Activated T-helper 2 cell treated with anti-CD3 and anti-CD28 coated beads, Interferon-gamma antibody, Interleukin-2, Interleukin-4, amounts not matched to agents 10 μg/mL and 5 μg/mL and 100 μg/mL, durations not matched to agents 14 hours and 24 hours and 36 hours (primary cell): ENCODE measurements at regions of chr1 and their contacts with region 1.

Region 1: GRCh38 chr1:84143796-84144565 is at the start of gene PRKACB:
- DNase-seq: no peak
- H3K4me3 Mint-ChIP-seq: peak within 1 kb of the TSS; percentile 95
- H3K27ac Mint-ChIP-seq: peak within 1 kb of the TSS; percentile 98
- H3K4me1 Mint-ChIP-seq: peaks cover 36% of the 10 kb centered on the region
- H3K27me3 Mint-ChIP-seq: no peaks in the 10 kb centered on the region
- total RNA-seq, gene PRKACB: 16.4 and 20.9 TPM in 2 replicates

Region 2: DNA sequence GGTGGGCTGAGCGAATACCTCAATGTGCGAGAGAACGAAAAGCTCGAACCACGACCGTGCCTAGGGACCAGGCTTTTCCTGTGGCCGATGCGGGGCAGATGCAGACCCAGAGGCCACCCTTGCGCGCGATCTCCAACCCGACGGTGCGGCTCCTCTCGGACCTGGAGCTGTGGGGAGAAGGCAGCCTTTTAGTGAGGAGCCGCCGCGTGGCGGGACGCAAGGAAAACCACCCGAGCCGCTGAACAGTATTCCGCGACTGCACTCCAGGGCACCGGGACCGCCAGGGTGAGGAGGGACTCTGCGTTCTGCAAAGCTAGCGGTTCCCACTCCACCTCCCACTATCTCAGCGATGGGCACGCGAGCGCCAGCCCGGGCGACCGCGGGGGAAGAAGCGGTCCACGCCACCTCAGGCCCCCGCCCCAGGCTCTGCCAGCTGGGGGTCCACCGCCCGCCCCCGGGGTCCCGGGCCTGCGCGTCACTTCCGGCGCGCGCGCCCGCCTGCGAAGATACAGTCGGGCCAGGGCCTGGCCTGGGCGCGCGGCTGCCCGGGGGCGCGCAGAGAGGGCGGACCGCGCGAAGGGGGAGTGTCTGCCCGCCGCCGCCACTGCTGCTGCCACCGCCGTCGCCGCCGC is 66.4 kb before region 1 on chr1:
- intact Hi-C with region 1: loop called (anchors 5 kb)
- DNase-seq: peak; percentile 70
- H3K4me3 Mint-ChIP-seq: peak overlapping the region; percentile 84
- H3K27ac Mint-ChIP-seq: peak overlapping the region; percentile 59
- H3K4me1 Mint-ChIP-seq: peaks cover 13% of the 10 kb centered on the region
- H3K27me3 Mint-ChIP-seq: peaks cover 6% of the 10 kb centered on the region

Region 3: GRCh38 chr1:84298328-84298683 is 154.3 kb after region 1 on chr1:
- intact Hi-C with region 1: loop called (anchors 2 kb)
- DNase-seq: peak; percentile 32
- H3K4me3 Mint-ChIP-seq: peak overlapping the region; percentile 88
- H3K27ac Mint-ChIP-seq: peak overlapping the region; percentile 77
- H3K4me1 Mint-ChIP-seq: peaks cover 34% of the 10 kb centered on the region
- H3K27me3 Mint-ChIP-seq: peaks cover 8% of the 10 kb centered on the region

Region 4: DNA sequence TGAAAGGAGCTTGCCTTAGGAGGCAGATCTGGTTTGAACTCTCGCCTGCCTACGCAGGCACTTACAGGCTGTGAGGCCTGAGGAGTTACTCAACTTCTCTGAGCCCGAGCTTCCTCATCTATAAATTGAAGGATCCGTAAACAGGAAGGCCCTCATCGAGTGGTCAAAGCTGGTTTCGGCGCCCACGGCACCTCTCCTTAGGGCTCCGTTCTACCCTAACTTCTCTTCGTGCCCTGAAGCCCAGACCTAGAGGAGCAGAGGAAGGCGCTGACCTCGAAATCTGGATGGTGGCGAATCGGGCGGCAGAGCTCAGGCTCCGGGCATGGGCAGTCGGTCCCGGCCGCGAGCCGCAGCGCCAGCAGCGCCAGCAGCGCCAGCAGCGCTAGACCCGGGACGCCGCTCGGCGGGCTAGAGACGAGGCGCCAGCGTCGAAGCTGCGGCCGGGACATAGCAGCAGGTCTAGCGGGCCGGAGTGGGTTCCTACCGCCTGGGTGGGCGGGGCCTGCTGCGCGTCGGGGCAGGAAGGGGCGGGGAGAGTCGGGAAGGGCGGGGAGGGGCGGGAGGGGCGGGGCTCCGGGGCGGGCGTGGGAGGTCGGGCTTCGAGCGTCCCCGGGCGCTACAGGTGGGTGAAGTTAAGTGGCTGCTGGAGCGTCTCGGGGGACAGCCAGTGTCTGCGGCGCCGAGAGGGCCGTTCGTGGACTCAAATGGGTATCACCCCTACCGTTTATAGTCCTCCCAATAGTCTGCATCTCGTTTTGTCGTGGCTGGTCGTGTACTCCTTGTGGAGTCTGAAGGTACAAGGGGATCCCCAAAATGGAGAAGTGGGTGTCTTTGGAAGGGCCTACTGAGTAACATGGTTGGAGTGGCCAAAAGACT is 430.2 kb after region 1 on chr1 and contains the start of gene CTBS:
- intact Hi-C with region 1: loop called (anchors 2 kb)
- DNase-seq: peak; percentile 76
- H3K4me3 Mint-ChIP-seq: peak within 1 kb of the TSS; percentile 97
- H3K27ac Mint-ChIP-seq: peak within 1 kb of the TSS; percentile 100
- H3K4me1 Mint-ChIP-seq: peaks cover 50% of the 10 kb centered on the region
- H3K27me3 Mint-ChIP-seq: no peaks in the 10 kb centered on the region
- total RNA-seq, gene CTBS: 14.1 and 15.1 TPM in 2 replicates

Region 5: DNA sequence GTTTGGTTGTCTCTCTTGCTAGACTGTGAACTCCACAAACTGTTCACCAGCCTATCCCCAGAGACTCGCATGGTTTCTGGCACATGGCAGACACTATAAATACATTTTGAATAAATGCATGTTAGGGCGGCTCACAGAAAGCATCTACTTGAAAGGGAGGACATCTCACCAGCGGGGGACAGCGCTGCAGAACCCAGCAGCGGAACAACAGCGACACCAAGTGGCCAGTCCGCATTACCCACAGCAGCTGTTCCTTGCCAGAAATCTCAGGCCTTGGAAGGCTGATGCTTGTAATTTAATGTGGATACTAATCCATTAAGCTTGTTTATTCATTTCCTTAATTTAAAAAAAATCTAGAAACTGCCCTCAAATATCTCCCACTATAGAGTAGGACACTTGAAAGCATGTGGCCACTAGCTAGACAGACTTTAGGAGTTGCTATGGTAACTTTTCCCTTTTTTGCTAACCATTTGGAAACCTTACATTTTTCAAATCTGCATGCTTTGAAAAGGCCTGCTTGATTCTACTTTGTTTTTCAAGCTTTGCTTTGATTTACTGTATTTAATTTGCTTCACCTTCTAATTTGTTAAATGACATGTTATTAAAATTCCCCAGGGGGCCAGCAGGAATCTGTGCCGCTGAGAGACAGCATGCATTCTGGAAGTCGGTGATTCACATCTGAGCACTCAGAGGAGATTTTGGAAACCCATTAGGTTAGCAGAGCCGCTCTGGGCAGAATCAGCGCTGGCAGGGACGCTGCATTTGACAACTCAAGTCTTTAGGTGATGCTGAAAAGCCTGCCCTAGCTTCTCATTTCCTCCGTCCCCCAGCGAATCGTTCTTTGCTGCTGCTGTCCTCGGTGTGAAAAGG is 609.8 kb after region 1 on chr1:
- intact Hi-C with region 1: loop called (anchors 2 kb)
- DNase-seq: peak; percentile 64
- H3K4me3 Mint-ChIP-seq: no peak overlapping the region
- H3K27ac Mint-ChIP-seq: no peak overlapping the region
- H3K4me1 Mint-ChIP-seq: peaks cover 7% of the 10 kb centered on the region
- H3K27me3 Mint-ChIP-seq: peaks cover 8% of the 10 kb centered on the region

Region 6: GRCh38 chr1:85276215-85276977 is 1132.4 kb after region 1 on chr1 and contains the start of gene BCL10:
- intact Hi-C with region 1: loop called (anchors 5 kb)
- DNase-seq: peak; percentile 98
- H3K4me3 Mint-ChIP-seq: peak within 1 kb of the TSS; percentile 83
- H3K27ac Mint-ChIP-seq: peak within 1 kb of the TSS; percentile 87
- H3K4me1 Mint-ChIP-seq: peaks cover 47% of the 10 kb centered on the region
- H3K27me3 Mint-ChIP-seq: peaks cover 12% of the 10 kb centered on the region
- total RNA-seq, gene BCL10: 24.4 and 27.4 TPM in 2 replicates